Sigmoid colon (tissue), 7 donors: ENCODE measurements at regions of chr12 and their contacts with region 1.

Region 1: GRCh38 chr12:2494486-2495192 is 300.1 kb upstream of the FKBP4 start:
- DNase-seq: peak; percentile 78
- H3K4me3 ChIP-seq: no peak overlapping the region
- H3K27ac ChIP-seq: peak overlapping the region; percentile 34 to 67 (median 56)
- H3K4me1 ChIP-seq: peaks cover 0 to 53% (median 50%) of the 10 kb centered on the region in 4 donors
- H3K27me3 ChIP-seq: no peaks in the 10 kb centered on the region
- CTCF ChIP-seq: no peak
- EP300 ChIP-seq: no peak
- POLR2A ChIP-seq: no peak

Region 2: DNA sequence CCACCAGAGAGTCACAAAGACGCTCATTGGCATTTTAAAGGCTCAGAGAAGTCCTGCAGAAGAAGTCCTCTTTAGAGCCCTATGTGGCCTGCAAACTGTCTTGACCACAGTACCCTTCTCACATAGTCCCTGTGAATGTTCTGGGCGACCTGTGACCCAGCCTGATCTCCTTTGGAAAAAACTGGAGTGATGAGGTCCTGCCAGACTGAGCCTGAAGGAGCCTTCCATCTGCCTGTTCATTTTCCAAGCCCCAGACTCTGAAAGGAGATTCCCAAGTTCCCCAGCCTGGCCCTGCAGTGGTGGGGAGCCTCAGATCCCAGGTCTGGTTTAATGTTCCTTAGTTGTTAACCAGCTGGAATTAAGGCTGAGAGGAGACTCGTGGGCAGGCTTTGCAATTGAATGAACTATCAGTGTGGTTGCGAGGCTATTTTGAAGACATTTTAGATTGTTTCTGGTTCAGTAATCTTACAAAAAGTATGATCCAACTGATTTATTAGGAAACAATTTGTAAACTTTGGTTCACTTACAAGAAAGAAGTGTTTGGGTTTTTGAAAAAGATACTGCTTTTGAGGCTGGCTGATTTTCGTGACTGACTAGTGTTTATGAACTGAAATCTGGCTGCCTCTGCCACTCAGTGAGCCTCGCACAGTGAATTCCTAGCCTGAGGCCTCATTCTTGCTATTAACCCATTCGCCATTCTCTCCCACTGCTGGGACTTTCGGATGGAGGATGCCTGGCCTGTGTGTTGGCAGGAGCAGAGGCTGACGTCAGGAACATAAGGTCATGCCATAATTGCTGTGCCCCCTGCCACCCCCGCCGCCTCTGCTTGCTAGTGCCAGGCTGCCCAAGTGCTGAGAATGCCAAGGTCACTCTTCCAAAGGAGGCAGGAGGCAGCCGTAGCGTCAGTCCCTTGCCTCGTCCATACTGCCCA is 192.8 kb before region 1 on chr12:
- intact Hi-C with region 1: loop called (anchors 10 kb)
- DNase-seq: peak; percentile 73
- H3K4me3 ChIP-seq: no peak overlapping the region
- H3K27ac ChIP-seq: peak overlapping the region; percentile 69 to 82 (median 73)
- H3K4me1 ChIP-seq: peaks cover 0 to 89% (median 84%) of the 10 kb centered on the region in 4 donors
- H3K27me3 ChIP-seq: no peaks in the 10 kb centered on the region
- CTCF ChIP-seq: no peak
- EP300 ChIP-seq: peak in 1 of 4 donors; percentile 12
- POLR2A ChIP-seq: no peak

Region 3: GRCh38 chr12:2376908-2377657 is 117.6 kb before region 1 on chr12:
- intact Hi-C with region 1: loop called (anchors 10 kb)
- DNase-seq: peak; percentile 48
- H3K4me3 ChIP-seq: no peak overlapping the region
- H3K27ac ChIP-seq: peak overlapping the region in 3 of 4 donors; percentile 71 to 90 (median 84)
- H3K4me1 ChIP-seq: peaks cover 0 to 97% (median 75%) of the 10 kb centered on the region in 4 donors
- H3K27me3 ChIP-seq: no peaks in the 10 kb centered on the region
- CTCF ChIP-seq: no peak
- EP300 ChIP-seq: no peak
- POLR2A ChIP-seq: no peak

Region 4: GRCh38 chr12:2769871-2770533 is 275.4 kb after region 1 on chr12:
- intact Hi-C with region 1: no loop called
- DNase-seq: no peak
- H3K4me3 ChIP-seq: no peak overlapping the region
- H3K27ac ChIP-seq: no peak overlapping the region
- H3K4me1 ChIP-seq: no peaks in the 10 kb centered on the region
- H3K27me3 ChIP-seq: no peaks in the 10 kb centered on the region
- CTCF ChIP-seq: no peak
- EP300 ChIP-seq: no peak
- POLR2A ChIP-seq: no peak